Activated CD8-positive, alpha-beta memory T cell treated with anti-CD3 and anti-CD28 coated beads, Interleukin-2, amount 10 ng/mL, durations not matched to agents 7 days and 5 days (primary cell): ENCODE measurements at regions of chr10 and their contacts with region 1.

Region 1: GRCh38 chr10:119750391-119751230 is 24.8 kb downstream of the INPP5F start:
- DNase-seq: peak; percentile 73
- ATAC-seq: peak; percentile 93
- H3K4me3 Mint-ChIP-seq: no peak overlapping the region
- H3K27ac Mint-ChIP-seq: no peak overlapping the region
- H3K4me1 Mint-ChIP-seq: peaks cover 4% of the 10 kb centered on the region
- H3K27me3 Mint-ChIP-seq: no peaks in the 10 kb centered on the region

Region 2: GRCh38 chr10:119762805-119763798 is 12.5 kb after region 1 on chr10:
- CTCF ChIA-PET with region 1: interaction called, 16 read pairs
- DNase-seq: no peak
- ATAC-seq: peak; percentile 60
- H3K4me3 Mint-ChIP-seq: no peak overlapping the region
- H3K27ac Mint-ChIP-seq: peak overlapping the region; percentile 12
- H3K4me1 Mint-ChIP-seq: peaks cover 12% of the 10 kb centered on the region
- H3K27me3 Mint-ChIP-seq: no peaks in the 10 kb centered on the region

Region 3: GRCh38 chr10:119769886-119770285 is 19.3 kb after region 1 on chr10:
- CTCF ChIA-PET with region 1: interaction called, 17 read pairs
- DNase-seq: no peak
- ATAC-seq: no peak
- H3K4me3 Mint-ChIP-seq: no peak overlapping the region
- H3K27ac Mint-ChIP-seq: no peak overlapping the region
- H3K4me1 Mint-ChIP-seq: peaks cover 2% of the 10 kb centered on the region
- H3K27me3 Mint-ChIP-seq: no peaks in the 10 kb centered on the region

Region 4: DNA sequence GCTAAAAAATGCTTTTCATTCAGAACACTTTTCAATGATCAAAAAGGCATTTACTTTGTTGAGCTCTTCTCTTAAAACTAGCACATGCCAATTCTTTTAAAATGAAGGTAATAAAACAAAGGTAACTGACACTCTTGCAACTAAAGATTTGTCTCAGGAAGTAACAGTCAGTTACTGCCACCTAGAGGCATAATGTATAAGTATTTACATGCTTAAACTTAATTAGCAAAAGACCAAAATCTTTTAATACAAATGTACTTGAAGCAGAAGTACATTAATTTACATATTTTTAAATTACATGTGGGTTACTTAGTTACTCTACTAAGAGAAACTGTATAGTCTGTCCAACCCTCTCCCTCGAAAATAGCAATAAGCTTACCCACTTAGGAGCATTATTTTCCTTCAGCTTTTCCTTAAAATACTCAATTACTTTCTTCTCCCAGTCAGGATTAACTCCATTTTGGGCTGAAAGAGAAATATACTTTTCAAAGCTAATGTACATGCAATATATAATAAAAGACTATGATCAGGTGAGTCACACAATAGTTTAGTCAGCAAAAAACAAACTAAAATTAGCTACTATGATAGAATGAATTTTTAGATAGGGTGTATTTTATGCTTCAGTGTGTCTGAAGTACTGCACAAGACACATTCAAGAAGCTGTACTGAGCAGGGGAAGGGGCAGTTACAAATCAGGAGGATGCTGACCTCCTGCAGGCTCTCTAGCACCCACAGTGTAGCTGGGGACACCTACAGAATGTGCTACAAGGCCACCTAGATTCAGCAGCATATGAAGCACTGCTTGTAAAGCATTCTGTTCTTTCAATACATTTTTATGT is 109.0 kb after region 1 on chr10:
- CTCF ChIA-PET with region 1: interaction called, 50 read pairs
- DNase-seq: no peak
- ATAC-seq: peak; percentile 27
- H3K4me3 Mint-ChIP-seq: no peak overlapping the region
- H3K27ac Mint-ChIP-seq: peak overlapping the region; percentile 36
- H3K4me1 Mint-ChIP-seq: peaks cover 44% of the 10 kb centered on the region
- H3K27me3 Mint-ChIP-seq: no peaks in the 10 kb centered on the region

Region 5: GRCh38 chr10:119872860-119873681 is 122.5 kb after region 1 on chr10:
- CTCF ChIA-PET with region 1: interaction called, 14 read pairs
- DNase-seq: peak; percentile 91
- ATAC-seq: peak; percentile 94
- H3K4me3 Mint-ChIP-seq: peak overlapping the region; percentile 79
- H3K27ac Mint-ChIP-seq: peak overlapping the region; percentile 87
- H3K4me1 Mint-ChIP-seq: peaks cover 36% of the 10 kb centered on the region
- H3K27me3 Mint-ChIP-seq: peaks cover 4% of the 10 kb centered on the region